Thyroid gland (tissue), 4 donors: ENCODE measurements at regions of chr6 and their contacts with region 1.

Region 1: GRCh38 chr6:157756708-157757429 is 66.2 kb upstream of the SNX9 start:
- DNase-seq: peak; percentile 94 to 95
- H3K4me3 ChIP-seq: no peak overlapping the region
- H3K27ac ChIP-seq: peak overlapping the region; percentile 23 to 37 (median 36)
- H3K4me1 ChIP-seq: peaks cover 8 to 33% of the 10 kb centered on the region in 2 donors
- H3K27me3 ChIP-seq: no peaks in the 10 kb centered on the region
- CTCF ChIP-seq: peak; percentile 74 to 97 (median 86)
- POLR2A ChIP-seq: no peak

Region 2: DNA sequence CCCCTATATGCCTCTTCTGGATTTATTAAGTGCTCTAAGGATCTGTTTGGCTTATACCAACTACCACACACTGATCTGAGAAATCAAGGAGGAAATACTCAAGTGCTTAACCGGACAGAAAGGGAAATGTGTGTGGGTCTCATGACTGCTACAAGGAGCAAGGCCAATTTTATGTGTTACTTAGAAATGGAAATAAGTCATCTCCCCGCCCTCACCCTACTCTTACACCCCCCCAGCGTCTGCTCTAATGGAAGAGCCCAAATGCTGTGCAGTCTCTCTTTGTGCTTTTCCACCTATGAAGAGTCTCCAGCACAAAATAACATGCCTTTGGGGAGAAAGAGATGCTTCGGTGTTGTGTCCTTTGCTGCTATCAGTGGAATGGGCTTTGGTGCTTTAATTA is 1408.4 kb before region 1 on chr6:
- intact Hi-C with region 1: no loop called
- DNase-seq: peak; percentile 23 to 28
- H3K4me3 ChIP-seq: no peak overlapping the region
- H3K27ac ChIP-seq: peak overlapping the region in 2 of 3 donors; percentile 31 to 35
- H3K4me1 ChIP-seq: peaks cover 6 to 13% of the 10 kb centered on the region in 2 donors
- H3K27me3 ChIP-seq: no peaks in the 10 kb centered on the region
- CTCF ChIP-seq: no peak
- POLR2A ChIP-seq: no peak

Region 3: DNA sequence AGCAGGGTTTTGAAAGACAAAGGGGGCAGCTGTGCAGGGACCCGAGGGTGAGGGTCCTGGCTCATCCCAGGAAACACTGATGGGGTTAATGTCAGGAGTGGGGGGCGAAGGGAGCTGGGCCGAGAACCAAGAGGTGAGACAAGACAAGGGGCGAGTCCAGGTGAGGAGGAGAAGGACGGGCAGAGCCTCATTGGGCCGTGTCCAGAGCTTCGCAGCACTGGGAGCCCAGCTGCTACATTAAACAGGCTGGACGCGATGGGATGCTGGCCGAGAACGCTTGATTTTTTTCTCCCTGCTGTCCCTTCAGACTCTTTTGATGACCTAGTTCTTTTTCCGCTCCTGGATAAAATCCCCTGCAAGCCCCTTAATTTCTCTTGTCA is 106.6 kb before region 1 on chr6:
- intact Hi-C with region 1: loop called (anchors 10 kb)
- DNase-seq: peak; percentile 86 to 87
- H3K4me3 ChIP-seq: no peak overlapping the region
- H3K27ac ChIP-seq: peak overlapping the region; percentile 62 to 95 (median 79)
- H3K4me1 ChIP-seq: peaks cover 54 to 60% of the 10 kb centered on the region in 2 donors
- H3K27me3 ChIP-seq: no peaks in the 10 kb centered on the region
- CTCF ChIP-seq: no peak
- POLR2A ChIP-seq: peak in 1 of 2 donors; percentile 4

Region 4: DNA sequence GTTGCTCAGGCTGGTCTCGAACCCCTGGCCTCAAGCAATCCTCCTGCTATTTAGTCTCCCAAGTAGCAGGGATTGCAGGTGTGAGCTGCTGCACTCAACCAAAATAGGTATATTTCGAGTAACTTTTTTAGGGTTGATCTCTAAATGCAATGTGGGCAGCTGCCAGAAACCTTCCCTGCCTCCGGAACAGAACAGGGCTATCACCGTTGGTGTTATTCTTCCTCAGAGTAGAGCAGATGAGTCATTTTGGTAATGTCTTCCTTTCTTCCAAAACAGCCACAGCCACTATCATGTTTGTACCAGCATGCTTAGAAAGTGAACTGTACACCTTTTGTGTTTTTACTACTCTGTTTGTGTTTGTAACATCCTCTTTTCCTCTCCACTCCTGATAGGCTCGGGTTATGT is 110.3 kb after region 1 on chr6:
- intact Hi-C with region 1: loop called (anchors 5 kb)
- DNase-seq: no peak
- H3K4me3 ChIP-seq: no peak overlapping the region
- H3K27ac ChIP-seq: no peak overlapping the region
- H3K4me1 ChIP-seq: peaks cover 0 to 9% of the 10 kb centered on the region in 2 donors
- H3K27me3 ChIP-seq: no peaks in the 10 kb centered on the region
- CTCF ChIP-seq: no peak
- POLR2A ChIP-seq: no peak